ENCODE measurements at regions of chr10 and their contacts with region 1.

Region 1: DNA sequence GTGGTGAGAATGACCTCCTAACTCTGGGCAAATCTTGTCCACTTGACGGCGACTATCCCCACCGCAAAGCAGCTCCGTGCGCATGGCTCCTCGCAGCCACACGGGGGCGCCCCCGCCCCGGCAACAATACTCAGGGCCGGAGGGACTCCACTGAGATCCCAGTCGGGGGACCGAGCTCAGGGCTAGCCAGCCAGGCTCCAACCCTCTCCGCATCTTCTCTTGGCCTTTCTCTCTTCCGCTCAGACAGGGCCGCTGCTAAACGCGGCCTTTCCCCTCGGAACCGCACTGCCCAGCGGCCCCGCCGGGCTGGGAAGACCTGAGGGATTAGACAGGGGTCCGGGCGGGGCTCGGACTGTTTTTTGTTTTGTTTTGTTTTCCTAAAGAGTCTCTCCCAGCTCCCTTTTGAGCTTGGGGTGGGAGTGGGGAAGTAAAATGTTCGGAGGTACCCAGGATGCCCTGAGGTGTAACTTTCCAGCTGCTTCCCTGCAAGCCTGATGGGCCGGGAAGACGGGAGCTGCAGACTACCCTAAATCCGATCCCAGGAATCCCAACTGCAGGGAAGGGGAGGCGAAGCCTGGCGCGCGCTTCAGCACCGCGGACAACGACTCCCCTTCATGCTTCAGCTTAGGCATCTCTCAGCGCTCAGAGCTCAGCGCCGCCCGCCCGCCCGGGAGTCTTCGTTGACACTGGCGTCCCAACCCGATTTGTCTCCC is 2.7 kb downstream of the KCNIP2 start:
- DNase-seq: peak; percentile 72
- ATAC-seq: peak; percentile 73
- H3K4me3 ChIP-seq: peak overlapping the region; percentile 48 to 60
- H3K27ac ChIP-seq: peak overlapping the region; percentile 4
- H3K4me1 ChIP-seq: peaks cover 14 to 32% of the 10 kb centered on the region in 2 experiments
- H3K27me3 ChIP-seq: no peaks in the 10 kb centered on the region
- CTCF ChIP-seq: peak in 2 of 3 experiments; percentile 100; a peak in 4 of 6 replicates
- POLR2A ChIP-seq: no peak
- RAD21 ChIP-seq: no peak

Region 2: DNA sequence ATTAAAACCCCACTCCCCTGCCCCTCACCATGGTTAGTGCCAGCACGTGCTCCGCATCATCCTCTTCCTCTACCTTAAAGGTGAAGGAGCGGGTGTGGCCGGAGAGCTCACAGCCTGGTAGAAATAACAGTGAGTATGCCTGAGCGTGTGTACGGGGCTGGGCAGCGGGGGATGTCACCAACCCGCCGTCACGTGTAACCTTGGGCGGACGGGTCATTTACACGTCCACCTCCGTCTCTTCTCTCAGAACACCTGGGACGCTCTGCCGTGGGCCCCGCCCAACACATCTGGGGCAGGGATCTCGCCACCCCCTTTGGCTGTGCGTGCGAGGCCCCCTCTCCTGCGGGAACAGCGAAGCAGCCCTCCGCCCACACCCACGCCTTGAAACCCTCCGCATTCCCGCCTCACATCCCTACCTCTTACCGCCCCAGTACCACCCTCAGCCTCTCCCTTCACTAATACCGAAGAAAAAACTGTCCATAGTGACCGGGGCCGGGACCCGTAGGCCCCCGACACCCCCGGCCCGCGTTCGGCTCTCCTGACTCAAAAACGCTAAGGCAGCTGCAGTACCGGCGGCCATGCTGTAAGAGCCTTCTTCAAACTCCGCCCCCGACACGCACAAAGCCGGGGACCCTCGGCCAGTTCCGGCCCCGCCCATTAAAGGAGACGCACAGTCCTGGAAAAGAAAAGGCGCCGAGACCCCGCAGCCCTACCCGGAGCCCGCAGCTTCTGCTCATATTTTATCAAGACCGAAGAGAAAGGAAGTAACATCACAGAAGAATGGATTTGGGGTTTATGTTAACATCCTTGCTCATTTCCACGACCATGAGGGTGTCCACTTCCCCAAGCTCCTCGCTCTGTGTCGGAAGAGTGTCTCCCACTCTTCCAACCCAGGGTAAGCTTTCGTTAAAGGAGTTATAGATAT is 57.8 kb before region 1 on chr10 and contains the start of gene NPM3:
- CTCF ChIA-PET with region 1: interaction called, 12 read pairs
- POLR2A ChIA-PET with region 1: no interaction called
- RAD21 ChIA-PET with region 1: no interaction called
- intact Hi-C with region 1: no loop called
- DNase-seq: peak; percentile 59
- ATAC-seq: peak; percentile 74
- H3K4me3 ChIP-seq: peak within 1 kb of the TSS; percentile 74 to 90
- H3K27ac ChIP-seq: peak within 1 kb of the TSS; percentile 66
- H3K4me1 ChIP-seq: peaks cover 19 to 45% of the 10 kb centered on the region in 2 experiments
- H3K27me3 ChIP-seq: no peaks in the 10 kb centered on the region
- CTCF ChIP-seq: no peak
- POLR2A ChIP-seq: peak; percentile 65
- RAD21 ChIP-seq: no peak
- total RNA-seq, gene NPM3: 267 TPM

Region 3: DNA sequence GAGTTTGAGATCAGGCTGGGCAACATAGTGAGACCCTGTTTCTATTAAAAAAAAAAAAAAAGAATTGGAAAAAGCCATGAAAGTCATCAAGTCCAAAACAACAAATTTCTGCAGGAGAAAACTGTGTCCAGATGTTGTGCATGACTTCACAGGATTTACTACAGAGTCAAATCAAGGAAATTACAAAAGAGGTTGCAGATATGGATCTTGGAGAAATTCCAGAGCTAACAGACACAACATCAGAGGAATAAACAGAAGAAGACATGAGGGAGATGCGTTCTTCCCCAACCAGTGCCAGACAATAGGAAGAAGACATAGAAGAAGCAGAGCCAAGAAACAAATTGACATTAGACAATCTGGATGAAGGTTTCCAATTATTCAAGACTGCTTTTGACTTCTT is 27.0 kb after region 1 on chr10:
- CTCF ChIA-PET with region 1: interaction called, 10 read pairs
- POLR2A ChIA-PET with region 1: no interaction called
- RAD21 ChIA-PET with region 1: no interaction called
- intact Hi-C with region 1: no loop called
- DNase-seq: no peak
- ATAC-seq: no peak
- H3K4me3 ChIP-seq: no peak overlapping the region
- H3K27ac ChIP-seq: no peak overlapping the region
- H3K4me1 ChIP-seq: no peaks in the 10 kb centered on the region
- H3K27me3 ChIP-seq: no peaks in the 10 kb centered on the region
- CTCF ChIP-seq: no peak
- POLR2A ChIP-seq: no peak
- RAD21 ChIP-seq: no peak

Region 4: GRCh38 chr10:101941871-101942270 is 101.0 kb after region 1 on chr10:
- CTCF ChIA-PET with region 1: interaction called, 11 read pairs
- POLR2A ChIA-PET with region 1: no interaction called
- RAD21 ChIA-PET with region 1: no interaction called
- intact Hi-C with region 1: no loop called
- DNase-seq: no peak
- ATAC-seq: no peak
- H3K4me3 ChIP-seq: no peak overlapping the region
- H3K27ac ChIP-seq: no peak overlapping the region
- H3K4me1 ChIP-seq: peaks cover 29 to 48% of the 10 kb centered on the region in 2 experiments
- H3K27me3 ChIP-seq: no peaks in the 10 kb centered on the region
- CTCF ChIP-seq: no peak
- POLR2A ChIP-seq: no peak
- RAD21 ChIP-seq: no peak

Region 5: GRCh38 chr10:102016416-102016815 is 175.5 kb after region 1 on chr10:
- CTCF ChIA-PET with region 1: interaction called, 267 read pairs
- POLR2A ChIA-PET with region 1: no interaction called
- RAD21 ChIA-PET with region 1: no interaction called
- intact Hi-C with region 1: no loop called
- DNase-seq: no peak
- ATAC-seq: no peak
- H3K4me3 ChIP-seq: no peak overlapping the region
- H3K27ac ChIP-seq: no peak overlapping the region
- H3K4me1 ChIP-seq: no peaks in the 10 kb centered on the region
- H3K27me3 ChIP-seq: no peaks in the 10 kb centered on the region
- CTCF ChIP-seq: no peak
- POLR2A ChIP-seq: no peak
- RAD21 ChIP-seq: no peak

Region 6: DNA sequence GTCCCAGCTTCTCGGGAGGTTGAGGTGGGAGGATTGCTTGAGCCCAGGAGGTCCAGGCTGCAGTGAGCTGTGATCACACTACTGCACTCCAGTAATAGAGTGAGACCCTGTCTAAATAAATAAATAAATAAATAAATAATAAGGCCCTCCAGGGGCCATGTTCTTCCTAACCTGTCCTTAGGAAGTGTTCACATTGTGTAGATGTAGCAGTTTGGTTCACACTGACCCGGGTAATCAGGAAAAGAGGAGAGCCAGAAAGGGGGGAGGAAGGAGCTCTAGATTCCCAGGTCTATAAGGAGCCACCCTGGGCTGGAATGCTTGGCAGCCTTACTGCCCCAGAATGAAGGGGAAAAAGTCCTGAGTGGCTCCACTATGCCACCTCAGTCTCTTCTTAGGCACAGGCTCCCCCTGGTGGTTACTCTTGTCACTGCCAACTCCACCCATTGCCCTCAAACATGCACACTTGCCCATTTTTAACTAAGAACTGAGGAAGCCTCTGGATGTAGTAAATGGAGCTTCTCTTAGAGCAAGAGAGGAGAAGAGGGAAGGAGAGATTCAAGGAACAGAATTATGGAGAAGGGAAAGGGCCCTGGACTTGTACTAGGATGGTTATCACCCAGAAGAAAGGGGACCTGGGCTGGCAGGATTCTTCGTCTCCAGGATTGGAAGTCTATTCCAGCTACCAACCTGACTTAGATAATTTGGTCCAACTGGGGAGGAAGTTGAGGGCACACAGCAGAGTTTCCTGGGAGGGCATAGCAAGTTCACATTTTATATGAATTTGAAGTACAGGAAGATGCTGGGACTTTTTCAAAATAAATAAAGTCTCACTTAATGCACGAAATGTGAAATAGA is 232.0 kb after region 1 on chr10:
- CTCF ChIA-PET with region 1: interaction called, 90 read pairs
- POLR2A ChIA-PET with region 1: no interaction called
- RAD21 ChIA-PET with region 1: interaction called, 6 to 9 read pairs
- intact Hi-C with region 1: loop called (anchors 1 kb)
- DNase-seq: peak; percentile 87
- ATAC-seq: peak; percentile 96
- H3K4me3 ChIP-seq: no peak overlapping the region
- H3K27ac ChIP-seq: no peak overlapping the region
- H3K4me1 ChIP-seq: peaks cover 5 to 6% of the 10 kb centered on the region in 2 experiments; a peak in 2 of 4 replicates
- H3K27me3 ChIP-seq: peaks cover under 1% of the 10 kb centered on the region; the same call in 1 of the 2 replicates
- CTCF ChIP-seq: peak in 2 of 3 experiments; percentile 100; a peak in 4 of 6 replicates
- POLR2A ChIP-seq: no peak
- RAD21 ChIP-seq: no peak